Caco-2 (cell line): ENCODE measurements at regions of chr9 and their contacts with region 1.

Region 1: DNA sequence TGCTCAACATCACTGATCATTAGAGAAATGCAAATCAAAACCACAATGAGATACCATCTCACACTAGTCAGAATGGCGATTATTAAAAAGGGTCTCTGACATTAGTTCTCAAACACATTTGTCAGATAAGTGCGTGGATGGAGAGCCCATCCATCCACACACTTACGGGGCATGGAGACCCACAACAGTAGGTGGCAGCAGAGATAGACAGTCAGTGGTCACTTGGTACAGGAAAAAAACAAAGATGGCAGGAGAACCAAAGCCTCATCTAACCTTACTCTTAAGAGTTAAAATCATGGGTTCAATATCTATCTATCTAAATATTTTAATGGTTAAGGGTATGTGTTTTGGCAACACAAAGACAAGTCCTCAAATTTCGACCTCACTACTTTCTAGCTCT is 1378.7 kb upstream of the C9orf72 start:
- DNase-seq: peak in 1 of 2 experiments; percentile 15
- H3K4me3 ChIP-seq: no peak overlapping the region
- H3K4me3 Mint-ChIP-seq: no peak overlapping the region
- H3K27ac Mint-ChIP-seq: no peak overlapping the region
- H3K4me1 ChIP-seq: no peaks in the 10 kb centered on the region
- H3K4me1 Mint-ChIP-seq: no peaks in the 10 kb centered on the region
- H3K27me3 ChIP-seq: no peaks in the 10 kb centered on the region
- H3K27me3 Mint-ChIP-seq: peaks cover 3% of the 10 kb centered on the region
- CTCF ChIP-seq: peak in 1 of 2 experiments; percentile 20

Region 2: DNA sequence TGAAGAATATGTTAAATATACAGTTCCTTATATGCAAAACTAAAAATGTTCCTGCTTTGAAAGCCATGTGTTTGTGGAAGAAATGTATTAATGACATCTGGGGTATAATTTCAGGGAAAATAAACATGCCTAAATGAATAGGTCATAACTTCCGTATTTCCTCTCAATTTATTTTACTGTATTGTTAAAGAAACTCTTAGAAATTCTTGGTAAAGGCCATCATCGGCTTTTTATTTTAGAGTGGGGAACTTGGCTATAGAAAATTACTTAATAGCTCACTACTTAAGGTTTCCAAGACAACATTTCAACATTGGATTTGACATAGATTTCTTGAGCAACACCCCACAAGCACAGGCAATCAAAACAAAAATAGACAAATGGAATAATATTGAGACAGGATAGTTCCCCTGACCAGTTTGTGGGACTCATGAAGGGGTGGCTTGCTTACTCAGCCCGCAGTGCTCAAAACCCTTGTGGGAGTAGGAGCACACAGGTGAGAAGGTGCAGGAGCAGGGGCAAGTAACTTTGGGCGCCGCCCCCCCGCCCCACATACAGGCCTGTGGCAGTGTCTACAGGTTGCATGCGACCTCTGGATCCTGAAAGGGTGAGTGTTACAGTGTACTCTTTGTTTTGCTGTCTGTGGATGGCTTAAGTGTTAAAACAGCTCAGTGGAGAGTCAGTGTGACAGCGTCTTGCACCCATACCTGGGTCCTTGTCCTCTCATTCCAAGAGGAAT is 487.3 kb before region 1 on chr9:
- CTCF ChIA-PET with region 1: no interaction called
- POLR2A ChIA-PET with region 1: no interaction called
- intact Hi-C with region 1: no loop called
- DNase-seq: no peak
- H3K4me3 ChIP-seq: no peak overlapping the region
- H3K4me3 Mint-ChIP-seq: no peak overlapping the region
- H3K27ac Mint-ChIP-seq: no peak overlapping the region
- H3K4me1 ChIP-seq: no peaks in the 10 kb centered on the region
- H3K4me1 Mint-ChIP-seq: no peaks in the 10 kb centered on the region
- H3K27me3 ChIP-seq: no peaks in the 10 kb centered on the region
- H3K27me3 Mint-ChIP-seq: no peaks in the 10 kb centered on the region
- CTCF ChIP-seq: no peak

Region 3: DNA sequence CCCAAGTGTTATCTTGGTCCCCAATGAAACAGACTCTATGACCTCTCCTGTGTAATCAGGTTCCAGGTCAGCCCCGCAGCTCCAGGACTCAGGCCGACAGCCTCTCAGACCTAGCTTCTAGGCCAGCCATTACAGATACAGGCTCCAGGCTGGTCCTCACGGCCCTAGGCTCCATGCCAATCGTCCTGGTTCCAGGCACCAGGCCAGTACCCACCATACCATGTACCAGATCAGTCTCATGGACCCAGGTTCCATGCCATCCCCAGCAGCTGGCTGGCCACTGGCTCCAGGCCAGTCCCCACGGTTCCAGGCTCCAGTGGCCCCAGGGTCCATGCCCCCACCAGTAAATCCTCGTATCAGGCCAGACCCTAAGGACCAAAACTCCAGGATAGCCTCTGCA is 52.0 kb before region 1 on chr9:
- CTCF ChIA-PET with region 1: no interaction called
- POLR2A ChIA-PET with region 1: no interaction called
- intact Hi-C with region 1: no loop called
- DNase-seq: no peak
- H3K4me3 ChIP-seq: no peak overlapping the region
- H3K4me3 Mint-ChIP-seq: no peak overlapping the region
- H3K27ac Mint-ChIP-seq: no peak overlapping the region
- H3K4me1 ChIP-seq: no peaks in the 10 kb centered on the region
- H3K4me1 Mint-ChIP-seq: no peaks in the 10 kb centered on the region
- H3K27me3 ChIP-seq: no peaks in the 10 kb centered on the region
- H3K27me3 Mint-ChIP-seq: peaks cover 3% of the 10 kb centered on the region
- CTCF ChIP-seq: no peak

Region 4: DNA sequence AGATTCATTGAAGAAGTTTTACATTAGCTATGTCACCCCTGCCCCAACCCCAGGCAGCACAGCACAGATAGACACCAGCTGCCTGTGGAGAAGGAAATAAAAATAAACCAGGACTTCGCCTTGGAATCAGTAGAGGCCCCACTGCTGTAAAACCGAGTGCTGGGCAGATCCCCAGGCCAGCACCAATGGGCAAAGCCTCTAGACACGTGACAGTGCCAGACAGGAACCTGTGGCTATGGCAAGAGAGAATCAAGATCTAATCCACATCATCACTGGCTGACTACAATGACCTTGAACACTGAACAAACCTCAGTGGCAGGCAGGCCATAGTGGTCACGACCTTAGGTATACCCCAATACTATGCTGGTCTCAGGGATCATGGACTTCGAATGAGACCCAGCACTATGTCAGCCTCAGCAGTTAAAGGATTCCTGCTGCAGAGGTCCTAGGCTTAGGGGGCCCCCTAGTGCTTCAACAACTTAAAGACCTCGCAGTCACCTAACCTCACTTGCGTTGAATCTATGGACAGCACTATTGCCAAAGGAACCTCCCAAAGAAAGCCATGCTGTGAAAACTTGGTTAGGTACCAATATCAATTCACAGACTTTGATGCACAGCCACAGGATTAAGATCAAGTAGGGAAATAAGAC is 739.9 kb after region 1 on chr9:
- CTCF ChIA-PET with region 1: no interaction called
- POLR2A ChIA-PET with region 1: no interaction called
- intact Hi-C with region 1: loop called (anchors 10 kb)
- DNase-seq: peak; percentile 41 to 45
- H3K4me3 ChIP-seq: no peak overlapping the region
- H3K4me3 Mint-ChIP-seq: no peak overlapping the region
- H3K27ac Mint-ChIP-seq: no peak overlapping the region
- H3K4me1 ChIP-seq: no peaks in the 10 kb centered on the region
- H3K4me1 Mint-ChIP-seq: no peaks in the 10 kb centered on the region
- H3K27me3 ChIP-seq: no peaks in the 10 kb centered on the region
- H3K27me3 Mint-ChIP-seq: peaks cover 2% of the 10 kb centered on the region
- CTCF ChIP-seq: peak in 1 of 2 experiments; percentile 28